AG04449 (cell line): ENCODE measurements at regions of chr6 and their contacts with region 1.

Region 1: GRCh38 chr6:38871741-38872568 is 156.8 kb downstream of the DNAH8 start:
- DNase-seq: no peak
- H3K4me3 ChIP-seq: no peak overlapping the region
- CTCF ChIP-seq: peak; percentile 87

Region 2: DNA sequence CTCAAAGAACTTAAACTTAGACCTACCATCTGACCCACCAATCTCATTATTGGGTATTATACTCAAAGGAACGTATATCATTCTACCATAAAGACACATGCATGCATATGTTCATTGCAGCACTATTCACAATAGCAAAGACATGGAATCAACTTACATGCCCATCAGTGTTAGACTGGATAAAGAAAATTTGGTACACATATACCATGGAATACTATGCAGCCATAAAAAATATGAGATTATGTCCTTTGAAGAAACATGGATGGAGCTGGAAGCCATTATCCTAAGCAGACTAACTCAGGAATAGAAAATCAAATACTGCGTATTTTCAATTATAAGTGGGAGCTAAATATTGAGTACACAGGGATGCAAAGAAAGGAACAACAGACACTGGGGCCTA is 10.2 kb after region 1 on chr6:
- CTCF ChIA-PET with region 1: interaction called, 21 read pairs
- POLR2A ChIA-PET with region 1: no interaction called
- DNase-seq: no peak
- H3K4me3 ChIP-seq: no peak overlapping the region
- CTCF ChIP-seq: no peak